GM13976 (cell line): ENCODE measurements at regions of chr10 and their contacts with region 1.

Region 1: GRCh38 chr10:79463578-79464496 is 18.4 kb upstream of the ZCCHC24 start:
- DNase-seq: no peak
- CTCF ChIP-seq: no peak

Region 2: DNA sequence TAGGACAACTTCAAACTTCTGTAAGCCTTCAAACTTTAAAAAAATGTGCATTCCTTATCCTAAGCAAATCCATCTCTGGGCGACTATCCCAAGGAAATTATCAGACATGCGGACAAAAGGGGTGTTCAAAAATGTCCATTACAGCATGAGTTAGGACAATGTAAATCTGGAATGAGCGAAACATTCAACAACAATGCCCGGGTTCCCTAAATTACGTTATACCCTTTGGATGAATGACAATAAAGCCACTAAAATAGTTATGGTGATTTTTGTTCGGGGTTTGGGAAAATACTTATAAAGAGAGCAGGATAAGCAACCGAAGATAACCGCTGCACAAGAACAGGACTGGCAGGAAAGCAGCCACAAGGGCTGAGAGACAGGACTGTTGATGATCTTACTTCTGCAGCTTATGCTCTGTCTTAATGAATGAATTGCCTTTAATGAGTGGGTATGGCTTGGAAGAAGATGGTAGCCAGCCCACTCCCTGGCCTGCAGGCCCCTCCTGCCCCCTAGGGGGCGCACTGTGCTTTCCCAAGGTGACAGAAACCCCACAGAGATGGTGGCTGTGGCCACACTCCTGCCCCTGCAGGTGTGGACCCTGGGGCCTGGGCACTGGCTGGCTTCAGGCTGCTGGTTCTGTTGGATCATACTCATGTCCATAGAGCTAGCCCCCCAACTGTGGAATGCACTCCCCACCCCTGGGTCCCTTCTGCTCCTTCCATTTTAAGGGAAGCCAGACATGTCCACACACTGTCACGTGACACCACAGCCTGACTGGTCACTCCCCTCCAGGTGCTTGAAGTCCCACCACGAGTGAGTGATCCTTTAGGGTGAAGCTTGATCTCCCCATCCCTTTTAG is 63.5 kb before region 1 on chr10:
- in situ Hi-C with region 1: loop called (anchors 10 kb)
- DNase-seq: peak; percentile 87
- CTCF ChIP-seq: peak; percentile 57